ENCODE measurements at regions of chr2 and their contacts with region 1.

Region 1: GRCh38 chr2:207473049-207473930 is 56.5 kb upstream of the CREB1 start:
- DNase-seq: peak in 4 of 5 donors; percentile 47 to 50 (median 49)
- ATAC-seq: peak; percentile 57 to 89 (median 88)
- H3K4me3 ChIP-seq: peak overlapping the region in 4 of 12 donors; percentile 16 to 45 (median 29)
- H3K27ac ChIP-seq: peak overlapping the region in 6 of 12 donors; percentile 9 to 56 (median 38)
- H3K4me1 ChIP-seq: peaks cover 0 to 29% (median 13%) of the 10 kb centered on the region in 12 donors
- H3K27me3 ChIP-seq: no peaks in the 10 kb centered on the region
- CTCF ChIP-seq: peak; percentile 48 to 82 (median 72)
- POLR2A ChIP-seq: no peak

Region 2: GRCh38 chr2:206800506-206801417 is 672.5 kb before region 1 on chr2:
- intact Hi-C with region 1: loop called (anchors 1 to 5 kb)
- DNase-seq: peak in 4 of 5 donors; percentile 58 to 72 (median 64)
- ATAC-seq: peak; percentile 67 to 81 (median 73)
- H3K4me3 ChIP-seq: peak overlapping the region in 4 of 12 donors; percentile 20 to 36 (median 26)
- H3K27ac ChIP-seq: no peak overlapping the region
- H3K4me1 ChIP-seq: peaks cover 0 to 28% (median 9%) of the 10 kb centered on the region in 12 donors
- H3K27me3 ChIP-seq: no peaks in the 10 kb centered on the region
- CTCF ChIP-seq: peak; percentile 56 to 82 (median 74)
- POLR2A ChIP-seq: no peak

Region 3: DNA sequence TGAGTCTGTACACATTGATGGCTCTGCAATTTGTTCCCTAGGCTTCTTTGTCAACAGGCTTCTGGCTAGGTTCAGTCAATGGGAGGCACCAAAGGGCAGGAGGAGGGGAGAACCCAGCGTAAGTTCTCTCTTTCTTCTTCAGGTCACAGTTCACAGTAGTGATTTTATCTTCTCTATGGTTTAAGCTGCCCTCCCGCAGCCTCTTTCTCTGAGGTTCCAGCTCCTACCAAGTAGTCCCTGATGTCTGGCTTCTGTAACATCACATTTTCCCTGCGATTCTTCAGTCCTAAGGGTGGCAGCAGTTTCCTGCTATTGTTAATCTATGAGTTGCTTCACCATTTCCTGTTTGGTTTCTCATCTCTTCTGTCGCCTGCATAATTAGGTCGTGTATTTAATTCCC is 426.6 kb before region 1 on chr2:
- intact Hi-C with region 1: loop called in 7 of 10 experiments (anchors 5 to 10 kb)
- DNase-seq: no peak
- ATAC-seq: peak in 3 of 4 donors; percentile 65 to 77 (median 73)
- H3K4me3 ChIP-seq: no peak overlapping the region
- H3K27ac ChIP-seq: peak overlapping the region in 1 of 12 donors; percentile 0
- H3K4me1 ChIP-seq: peaks cover 0 to 22% (median 6%) of the 10 kb centered on the region in 12 donors
- H3K27me3 ChIP-seq: no peaks in the 10 kb centered on the region
- CTCF ChIP-seq: peak in 7 of 12 donors; percentile 29 to 50 (median 37)
- POLR2A ChIP-seq: no peak

Region 4: GRCh38 chr2:207283356-207283755 is 189.9 kb before region 1 on chr2:
- intact Hi-C with region 1: loop called in 1 of 10 experiments (anchors 5 kb)
- DNase-seq: peak; percentile 16 to 63 (median 38)
- ATAC-seq: peak; percentile 49 to 86 (median 78)
- H3K4me3 ChIP-seq: no peak overlapping the region
- H3K27ac ChIP-seq: peak overlapping the region in 3 of 12 donors; percentile 7 to 63 (median 9)
- H3K4me1 ChIP-seq: peaks cover 0 to 37% (median 16%) of the 10 kb centered on the region in 12 donors
- H3K27me3 ChIP-seq: no peaks in the 10 kb centered on the region
- CTCF ChIP-seq: peak in 3 of 12 donors; percentile 10 to 19 (median 11)
- POLR2A ChIP-seq: no peak

Region 5: GRCh38 chr2:207341804-207342203 is 131.5 kb before region 1 on chr2:
- intact Hi-C with region 1: loop called in 4 of 10 experiments (anchors 5 to 10 kb)
- DNase-seq: no peak
- ATAC-seq: no peak
- H3K4me3 ChIP-seq: no peak overlapping the region
- H3K27ac ChIP-seq: no peak overlapping the region
- H3K4me1 ChIP-seq: peaks cover 0 to 31% (median 13%) of the 10 kb centered on the region in 12 donors
- H3K27me3 ChIP-seq: no peaks in the 10 kb centered on the region
- CTCF ChIP-seq: peak in 1 of 12 donors; percentile 20
- POLR2A ChIP-seq: no peak

Region 6: DNA sequence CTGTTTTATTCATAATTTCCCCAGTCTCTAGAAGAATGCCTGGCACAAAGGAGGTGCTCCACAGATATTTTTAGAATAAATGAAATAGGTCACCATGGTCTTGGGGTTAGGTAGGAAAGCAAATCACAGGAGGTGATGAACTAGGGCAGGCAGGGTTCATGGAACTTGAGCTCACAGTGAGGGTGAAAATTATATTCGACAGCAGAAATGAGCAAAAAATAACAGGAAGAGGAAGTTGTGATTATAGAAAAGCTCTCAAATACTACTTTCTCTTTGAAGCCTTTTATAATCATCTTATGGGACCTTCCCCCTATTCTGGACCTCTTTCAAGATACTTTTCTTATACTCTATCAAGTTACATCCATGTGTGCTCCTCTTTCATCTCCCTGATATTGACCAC is 52.0 kb after region 1 on chr2:
- intact Hi-C with region 1: no loop called
- DNase-seq: no peak
- ATAC-seq: no peak
- H3K4me3 ChIP-seq: no peak overlapping the region
- H3K27ac ChIP-seq: peak overlapping the region in 1 of 12 donors; percentile 57
- H3K4me1 ChIP-seq: peaks cover 0 to 35% (median 8%) of the 10 kb centered on the region in 12 donors
- H3K27me3 ChIP-seq: no peaks in the 10 kb centered on the region
- CTCF ChIP-seq: no peak
- POLR2A ChIP-seq: no peak

Region 7: GRCh38 chr2:207612714-207613113 is 139.4 kb after region 1 on chr2:
- intact Hi-C with region 1: no loop called
- DNase-seq: no peak
- ATAC-seq: no peak
- H3K4me3 ChIP-seq: no peak overlapping the region
- H3K27ac ChIP-seq: no peak overlapping the region
- H3K4me1 ChIP-seq: peaks cover 0 to 6% (median 0%) of the 10 kb centered on the region in 12 donors
- H3K27me3 ChIP-seq: no peaks in the 10 kb centered on the region
- CTCF ChIP-seq: no peak
- POLR2A ChIP-seq: no peak

Region 8: DNA sequence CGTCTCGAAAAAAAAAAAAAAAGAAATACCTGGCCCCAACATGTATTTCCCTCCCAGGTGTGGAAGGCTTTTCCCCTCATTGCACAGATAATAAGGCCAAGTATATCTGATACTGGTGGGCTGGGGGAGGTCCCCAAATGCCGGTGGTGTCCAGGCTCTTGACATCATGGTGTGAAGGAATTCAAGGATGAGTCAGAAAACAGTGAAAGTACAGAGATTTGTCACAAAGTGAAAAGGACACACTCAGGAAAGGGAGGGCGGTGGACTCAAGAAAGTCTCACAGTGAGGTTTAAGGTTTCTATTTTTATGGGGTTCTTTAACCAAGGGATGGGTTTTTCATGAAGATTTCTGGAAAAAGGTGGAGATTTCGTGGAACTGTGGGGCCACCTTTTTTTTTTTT is 334.2 kb after region 1 on chr2:
- intact Hi-C with region 1: no loop called
- DNase-seq: no peak
- ATAC-seq: no peak
- H3K4me3 ChIP-seq: no peak overlapping the region
- H3K27ac ChIP-seq: no peak overlapping the region
- H3K4me1 ChIP-seq: peaks cover 0 to 14% (median 4%) of the 10 kb centered on the region in 12 donors
- H3K27me3 ChIP-seq: no peaks in the 10 kb centered on the region
- CTCF ChIP-seq: no peak
- POLR2A ChIP-seq: no peak

Measured in heart left ventricle (tissue), 16 donors.